Activated CD4-positive, alpha-beta T cell treated with anti-CD3 and anti-CD28 coated beads for 36 hours (primary cell): ENCODE measurements at regions of chr4 and their contacts with region 1.

Region 1: DNA sequence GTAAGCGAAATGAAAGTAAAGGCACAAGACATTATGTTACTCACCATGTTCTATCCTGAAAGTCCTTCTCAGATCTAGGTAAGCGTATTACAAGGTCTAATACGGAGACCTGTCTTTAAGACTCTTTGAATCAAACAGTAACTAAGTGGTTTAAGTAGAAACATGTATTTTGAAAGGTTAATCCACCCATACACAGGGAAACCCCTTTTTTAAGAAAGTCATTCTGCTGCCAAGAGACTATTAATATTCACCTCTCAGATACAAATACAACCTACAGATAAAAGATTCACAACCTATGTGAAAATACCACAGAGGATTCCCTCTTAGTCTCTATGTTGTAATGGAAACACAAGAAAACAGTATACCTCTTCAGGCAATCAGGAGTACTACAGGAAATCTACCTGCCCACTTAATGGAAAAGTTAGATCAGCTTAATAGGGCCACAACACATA is 63.2 kb upstream of the TNIP3 start:
- DNase-seq: no peak
- ATAC-seq: peak; percentile 93
- H3K4me3 Mint-ChIP-seq: peak overlapping the region; percentile 62
- H3K27ac Mint-ChIP-seq: peak overlapping the region; percentile 70
- H3K4me1 Mint-ChIP-seq: peaks cover 42% of the 10 kb centered on the region
- H3K27me3 Mint-ChIP-seq: peaks cover 2% of the 10 kb centered on the region

Region 2: GRCh38 chr4:121199742-121200561 is 27.4 kb before region 1 on chr4:
- CTCF ChIA-PET with region 1: interaction called, 9 read pairs
- POLR2A ChIA-PET with region 1: no interaction called
- intact Hi-C with region 1: loop called in 1 of 2 experiments (anchors 2 kb)
- DNase-seq: peak; percentile 50
- ATAC-seq: peak; percentile 92
- H3K4me3 Mint-ChIP-seq: no peak overlapping the region
- H3K27ac Mint-ChIP-seq: peak overlapping the region; percentile 34
- H3K4me1 Mint-ChIP-seq: peaks cover 27% of the 10 kb centered on the region
- H3K27me3 Mint-ChIP-seq: no peaks in the 10 kb centered on the region

Region 3: GRCh38 chr4:121243485-121243884 is 16.1 kb after region 1 on chr4:
- CTCF ChIA-PET with region 1: interaction called, 12 read pairs
- POLR2A ChIA-PET with region 1: interaction called, 4 read pairs
- intact Hi-C with region 1: loop called in 1 of 2 experiments (anchors 1 kb)
- DNase-seq: peak; percentile 25
- ATAC-seq: peak; percentile 71
- H3K4me3 Mint-ChIP-seq: no peak overlapping the region
- H3K27ac Mint-ChIP-seq: no peak overlapping the region
- H3K4me1 Mint-ChIP-seq: peaks cover 27% of the 10 kb centered on the region
- H3K27me3 Mint-ChIP-seq: no peaks in the 10 kb centered on the region

Region 4: DNA sequence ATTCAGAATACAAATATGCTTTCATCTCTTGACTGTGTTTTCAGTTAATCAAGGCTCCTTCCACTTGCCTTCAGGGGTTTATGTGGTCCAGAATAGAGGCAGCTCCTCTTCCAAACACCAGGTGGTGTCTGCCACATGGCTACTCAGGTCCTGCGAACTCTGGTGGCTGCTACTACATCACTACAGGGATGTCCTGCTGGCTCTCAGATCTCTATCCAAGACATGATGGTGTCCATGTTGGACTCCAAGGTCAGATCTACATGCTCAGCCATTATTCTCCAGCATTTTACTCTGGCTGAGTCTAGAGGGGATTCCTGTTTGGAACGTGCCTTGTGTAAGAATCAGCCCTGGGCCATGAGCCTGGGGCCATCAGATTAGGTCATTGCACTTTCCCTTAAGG is 50.3 kb after region 1 on chr4:
- CTCF ChIA-PET with region 1: interaction called, 3 read pairs
- POLR2A ChIA-PET with region 1: no interaction called
- intact Hi-C with region 1: loop called in 1 of 2 experiments (anchors 2 kb)
- DNase-seq: peak; percentile 19
- ATAC-seq: no peak
- H3K4me3 Mint-ChIP-seq: no peak overlapping the region
- H3K27ac Mint-ChIP-seq: no peak overlapping the region
- H3K4me1 Mint-ChIP-seq: peaks cover 22% of the 10 kb centered on the region
- H3K27me3 Mint-ChIP-seq: peaks cover 19% of the 10 kb centered on the region